ENCODE measurements at regions of chr14 and their contacts with region 1.

Region 1: GRCh38 chr14:22929104-22929847 is at the start of gene PRMT5:
- DNase-seq: peak; percentile 93 to 99
- ATAC-seq: peak; percentile 93 to 98 (median 94)
- H3K4me3 ChIP-seq: peak within 1 kb of the TSS; percentile 89
- H3K4me3 Mint-ChIP-seq: no peak within 1 kb of the TSS
- H3K27ac ChIP-seq: peak within 1 kb of the TSS; percentile 85
- H3K27ac Mint-ChIP-seq: no peak within 1 kb of the TSS
- H3K4me1 ChIP-seq: peaks cover 18% of the 10 kb centered on the region
- H3K4me1 Mint-ChIP-seq: no peaks in the 10 kb centered on the region
- H3K27me3 ChIP-seq: no peaks in the 10 kb centered on the region
- H3K27me3 Mint-ChIP-seq: no peaks in the 10 kb centered on the region
- CTCF ChIP-seq: no peak
- total RNA-seq, gene PRMT5: 16.3 to 22.4 (median 18.5) TPM

Region 2: GRCh38 chr14:22918804-22919600 is 10.3 kb before region 1 on chr14 and contains the start of gene RBM23:
- intact Hi-C with region 1: loop called (anchors 1 kb)
- DNase-seq: peak; percentile 99 to 100
- ATAC-seq: peak; percentile 86 to 97 (median 91)
- H3K4me3 ChIP-seq: peak within 1 kb of the TSS; percentile 64
- H3K4me3 Mint-ChIP-seq: peak within 1 kb of the TSS; percentile 99
- H3K27ac ChIP-seq: peak within 1 kb of the TSS; percentile 96
- H3K27ac Mint-ChIP-seq: peak within 1 kb of the TSS; percentile 100
- H3K4me1 ChIP-seq: peaks cover 21% of the 10 kb centered on the region
- H3K4me1 Mint-ChIP-seq: peaks cover 25 to 30% of the 10 kb centered on the region in 2 donors
- H3K27me3 ChIP-seq: no peaks in the 10 kb centered on the region
- H3K27me3 Mint-ChIP-seq: peaks cover 0 to 3% of the 10 kb centered on the region in 2 donors
- CTCF ChIP-seq: no peak
- total RNA-seq, gene RBM23: 86.4 to 120 (median 108) TPM

Region 3: GRCh38 chr14:22986508-22987054 is 57.3 kb after region 1 on chr14:
- intact Hi-C with region 1: loop called (anchors 1 kb)
- DNase-seq: peak; percentile 78 to 95
- ATAC-seq: peak; percentile 70 to 82 (median 70)
- H3K4me3 ChIP-seq: no peak overlapping the region
- H3K4me3 Mint-ChIP-seq: no peak overlapping the region
- H3K27ac ChIP-seq: no peak overlapping the region
- H3K27ac Mint-ChIP-seq: no peak overlapping the region
- H3K4me1 ChIP-seq: peaks cover 15% of the 10 kb centered on the region
- H3K4me1 Mint-ChIP-seq: no peaks in the 10 kb centered on the region
- H3K27me3 ChIP-seq: peaks cover 7% of the 10 kb centered on the region
- H3K27me3 Mint-ChIP-seq: no peaks in the 10 kb centered on the region
- CTCF ChIP-seq: peak; percentile 83

Region 4: DNA sequence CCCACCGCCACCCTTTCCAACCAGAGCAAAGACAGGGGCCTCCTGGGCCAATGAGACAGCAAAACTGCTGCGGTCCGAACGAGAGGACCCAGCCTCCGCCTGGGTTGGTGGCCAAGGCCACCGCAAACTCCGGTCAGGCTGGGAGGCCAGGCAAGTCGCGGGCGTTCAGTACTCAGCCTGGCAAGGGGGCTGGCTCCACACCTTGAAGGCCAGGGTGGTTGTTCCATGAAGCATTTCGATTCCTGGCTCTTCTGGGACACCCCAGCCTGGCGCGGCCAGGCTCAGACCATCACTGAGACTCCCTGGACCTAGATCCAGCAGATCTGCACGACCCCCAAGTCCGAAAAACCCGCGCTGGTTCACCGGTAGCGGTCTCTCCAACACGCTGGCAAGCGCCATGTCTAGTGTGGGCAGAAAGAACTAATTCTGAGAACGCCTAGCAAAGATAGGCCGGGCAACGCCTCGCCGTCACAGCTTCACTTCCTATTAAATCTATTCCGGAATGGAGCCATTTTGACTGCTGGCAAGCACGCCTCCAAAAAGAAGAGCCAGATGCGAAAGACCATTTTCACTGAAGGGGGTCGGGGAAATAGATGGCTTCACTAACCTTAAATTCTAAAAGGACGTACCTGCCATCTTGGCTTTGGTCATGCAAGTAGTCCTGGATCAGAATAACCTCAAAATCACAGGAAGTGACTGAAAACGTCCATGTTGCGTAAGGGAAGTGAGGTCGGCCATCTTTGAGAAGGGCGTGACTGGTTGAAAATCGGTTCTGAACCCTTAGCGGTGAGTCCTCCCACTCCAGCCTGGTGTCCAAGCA is 105.4 kb after region 1 on chr14 and contains the start of gene PSMB5:
- intact Hi-C with region 1: loop called (anchors 1 kb)
- DNase-seq: peak; percentile 76 to 96
- ATAC-seq: peak; percentile 93 to 98 (median 94)
- H3K4me3 ChIP-seq: peak within 1 kb of the TSS; percentile 74
- H3K4me3 Mint-ChIP-seq: peak within 1 kb of the TSS; percentile 90
- H3K27ac ChIP-seq: peak within 1 kb of the TSS; percentile 93
- H3K27ac Mint-ChIP-seq: peak within 1 kb of the TSS; percentile 98 to 100
- H3K4me1 ChIP-seq: peaks cover 15% of the 10 kb centered on the region
- H3K4me1 Mint-ChIP-seq: peaks cover 25 to 32% of the 10 kb centered on the region in 2 donors
- H3K27me3 ChIP-seq: no peaks in the 10 kb centered on the region
- H3K27me3 Mint-ChIP-seq: no peaks in the 10 kb centered on the region
- CTCF ChIP-seq: no peak
- total RNA-seq, gene PSMB5: 15.7 to 19.1 (median 16.4) TPM

Region 5: GRCh38 chr14:23929822-23930294 is 1000.6 kb after region 1 on chr14:
- intact Hi-C with region 1: no loop called
- DNase-seq: peak; percentile 75 to 91
- ATAC-seq: peak; percentile 87 to 100 (median 97)
- H3K4me3 ChIP-seq: no peak overlapping the region
- H3K4me3 Mint-ChIP-seq: no peak overlapping the region
- H3K27ac ChIP-seq: no peak overlapping the region
- H3K27ac Mint-ChIP-seq: no peak overlapping the region
- H3K4me1 ChIP-seq: no peaks in the 10 kb centered on the region
- H3K4me1 Mint-ChIP-seq: no peaks in the 10 kb centered on the region
- H3K27me3 ChIP-seq: no peaks in the 10 kb centered on the region
- H3K27me3 Mint-ChIP-seq: peaks cover 0 to 3% of the 10 kb centered on the region in 2 donors
- CTCF ChIP-seq: peak; percentile 95

Region 6: GRCh38 chr14:24135834-24136542 is 1206.7 kb after region 1 on chr14 and contains the start of gene PSME1:
- intact Hi-C with region 1: loop called (anchors 10 kb)
- DNase-seq: peak; percentile 95 to 97
- ATAC-seq: peak; percentile 95 to 99 (median 97)
- H3K4me3 ChIP-seq: peak within 1 kb of the TSS; percentile 82
- H3K4me3 Mint-ChIP-seq: peak within 1 kb of the TSS; percentile 97
- H3K27ac ChIP-seq: peak within 1 kb of the TSS; percentile 93
- H3K27ac Mint-ChIP-seq: peak within 1 kb of the TSS; percentile 91 to 94
- H3K4me1 ChIP-seq: peaks cover 46% of the 10 kb centered on the region
- H3K4me1 Mint-ChIP-seq: peaks cover 36 to 39% of the 10 kb centered on the region in 2 donors
- H3K27me3 ChIP-seq: no peaks in the 10 kb centered on the region
- H3K27me3 Mint-ChIP-seq: no peaks in the 10 kb centered on the region
- CTCF ChIP-seq: no peak
- total RNA-seq, gene PSME1: 315 to 345 (median 318) TPM

Measured in natural killer cell (primary cell).